Mucosa of descending colon (tissue), 3 donors: ENCODE measurements at regions of chr12 and their contacts with region 1.

Region 1: GRCh38 chr12:17778242-17778641 is 311.8 kb downstream of the RERGL start:
- DNase-seq: no peak
- ATAC-seq: no peak
- H3K4me3 ChIP-seq: no peak overlapping the region
- H3K4me1 ChIP-seq: no peaks in the 10 kb centered on the region
- CTCF ChIP-seq: no peak

Region 2: DNA sequence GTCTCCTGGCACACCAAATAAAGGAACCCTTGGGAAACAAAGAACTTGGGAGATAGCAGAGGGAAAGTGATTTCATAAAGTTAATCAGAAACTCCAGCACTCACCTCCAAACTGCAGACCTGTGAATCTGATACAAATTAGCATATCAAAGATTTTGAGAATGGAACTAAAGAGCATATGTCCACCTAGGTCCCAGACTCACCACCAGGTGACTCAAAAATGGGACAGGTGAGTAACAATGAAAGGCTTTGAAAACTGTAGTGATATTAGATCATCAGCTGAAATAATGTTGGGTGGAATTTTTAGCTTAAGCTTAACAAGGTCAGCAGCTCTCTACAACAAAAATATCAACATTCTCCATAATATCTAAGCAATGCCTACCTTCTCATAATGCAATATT is 97.0 kb after region 1 on chr12:
- intact Hi-C with region 1: loop called (anchors 5 kb)
- DNase-seq: no peak
- ATAC-seq: no peak
- H3K4me3 ChIP-seq: no peak overlapping the region
- H3K4me1 ChIP-seq: no peaks in the 10 kb centered on the region
- CTCF ChIP-seq: no peak